Mammary epithelial cell (primary cell): ENCODE measurements at regions of chr11 and their contacts with region 1.

Region 1: GRCh38 chr11:29527391-29527936 is 489.4 kb downstream of the KCNA4 start:
- DNase-seq: peak; percentile 82
- H3K4me3 ChIP-seq: no peak overlapping the region
- H3K27ac ChIP-seq: peak overlapping the region; percentile 49
- H3K4me1 ChIP-seq: no peaks in the 10 kb centered on the region
- H3K27me3 ChIP-seq: no peaks in the 10 kb centered on the region
- CTCF ChIP-seq: peak; percentile 77 to 79

Region 2: GRCh38 chr11:29321293-29322132 is 206.0 kb before region 1 on chr11:
- CTCF ChIA-PET with region 1: no interaction called
- dilution Hi-C with region 1: no loop called
- in situ Hi-C with region 1: no loop called
- intact Hi-C with region 1: no loop called
- DNase-seq: peak; percentile 81
- H3K4me3 ChIP-seq: no peak overlapping the region
- H3K27ac ChIP-seq: peak overlapping the region; percentile 63
- H3K4me1 ChIP-seq: peaks cover 26% of the 10 kb centered on the region
- H3K27me3 ChIP-seq: no peaks in the 10 kb centered on the region
- CTCF ChIP-seq: no peak

Region 3: DNA sequence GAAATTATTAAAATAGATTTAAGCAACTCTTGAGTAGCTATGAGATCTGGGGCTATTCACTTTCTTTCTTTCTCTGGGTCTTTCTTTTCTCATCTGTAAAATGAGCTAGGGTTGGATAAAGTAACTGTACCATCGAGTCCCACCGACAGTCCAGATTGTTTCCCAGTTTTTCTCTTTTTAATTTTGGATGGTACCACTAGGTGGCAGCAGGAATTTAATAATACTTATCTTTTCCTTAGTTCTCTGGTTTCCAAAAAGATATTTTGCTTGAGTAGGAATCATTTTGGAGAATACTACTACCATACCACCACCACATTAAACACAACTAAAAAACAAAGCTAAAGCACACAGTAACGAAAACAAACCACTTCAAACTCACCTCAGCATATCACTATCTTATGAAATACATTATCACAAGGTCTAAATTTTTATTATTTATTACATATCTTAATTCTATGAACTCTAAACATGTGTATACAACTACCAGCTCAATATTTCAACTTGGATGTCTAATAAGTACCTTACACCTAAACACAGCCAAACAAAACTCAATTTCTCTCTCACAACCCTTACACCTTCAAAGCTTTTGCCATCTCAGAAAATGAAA is 94.6 kb before region 1 on chr11:
- CTCF ChIA-PET with region 1: no interaction called
- dilution Hi-C with region 1: no loop called
- in situ Hi-C with region 1: no loop called
- intact Hi-C with region 1: no loop called
- DNase-seq: peak; percentile 5
- H3K4me3 ChIP-seq: no peak overlapping the region
- H3K27ac ChIP-seq: no peak overlapping the region
- H3K4me1 ChIP-seq: no peaks in the 10 kb centered on the region
- H3K27me3 ChIP-seq: no peaks in the 10 kb centered on the region
- CTCF ChIP-seq: peak; percentile 45 to 49

Region 4: DNA sequence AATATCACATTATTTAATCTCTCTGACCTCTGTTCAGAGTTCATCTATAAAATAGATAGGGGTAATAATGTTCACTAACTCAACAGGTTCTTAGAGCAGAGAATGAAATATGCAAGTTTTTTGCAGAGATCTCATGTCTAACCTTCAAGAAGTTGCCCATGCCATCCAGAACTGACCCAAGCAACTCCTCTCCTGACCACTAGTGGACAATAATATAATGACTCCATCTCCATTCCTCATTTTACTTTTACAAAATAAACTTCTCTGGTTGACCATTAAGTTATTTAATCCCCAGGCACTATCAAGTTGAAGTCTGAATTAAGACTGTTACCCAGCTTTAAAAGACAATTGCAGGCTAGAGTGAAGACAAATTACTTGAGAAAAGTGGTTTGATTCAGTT is 106.8 kb after region 1 on chr11:
- CTCF ChIA-PET with region 1: no interaction called
- dilution Hi-C with region 1: no loop called
- in situ Hi-C with region 1: no loop called
- intact Hi-C with region 1: loop called (anchors 5 kb)
- DNase-seq: no peak
- H3K4me3 ChIP-seq: no peak overlapping the region
- H3K27ac ChIP-seq: no peak overlapping the region
- H3K4me1 ChIP-seq: no peaks in the 10 kb centered on the region
- H3K27me3 ChIP-seq: no peaks in the 10 kb centered on the region
- CTCF ChIP-seq: peak; percentile 41 to 46